ENCODE measurements at regions of chr12 and their contacts with region 1.

Region 1: GRCh38 chr12:2812290-2813213 is at the start of gene ITFG2:
- DNase-seq: peak; percentile 88
- ATAC-seq: peak; percentile 95
- H3K4me3 Mint-ChIP-seq: peak within 1 kb of the TSS; percentile 100
- H3K27ac Mint-ChIP-seq: peak within 1 kb of the TSS; percentile 99
- H3K4me1 Mint-ChIP-seq: peaks cover 33% of the 10 kb centered on the region
- H3K27me3 Mint-ChIP-seq: no peaks in the 10 kb centered on the region
- CTCF ChIP-seq: no peak
- total RNA-seq, gene ITFG2: 90.1 and 90.6 TPM in 2 replicates

Region 2: DNA sequence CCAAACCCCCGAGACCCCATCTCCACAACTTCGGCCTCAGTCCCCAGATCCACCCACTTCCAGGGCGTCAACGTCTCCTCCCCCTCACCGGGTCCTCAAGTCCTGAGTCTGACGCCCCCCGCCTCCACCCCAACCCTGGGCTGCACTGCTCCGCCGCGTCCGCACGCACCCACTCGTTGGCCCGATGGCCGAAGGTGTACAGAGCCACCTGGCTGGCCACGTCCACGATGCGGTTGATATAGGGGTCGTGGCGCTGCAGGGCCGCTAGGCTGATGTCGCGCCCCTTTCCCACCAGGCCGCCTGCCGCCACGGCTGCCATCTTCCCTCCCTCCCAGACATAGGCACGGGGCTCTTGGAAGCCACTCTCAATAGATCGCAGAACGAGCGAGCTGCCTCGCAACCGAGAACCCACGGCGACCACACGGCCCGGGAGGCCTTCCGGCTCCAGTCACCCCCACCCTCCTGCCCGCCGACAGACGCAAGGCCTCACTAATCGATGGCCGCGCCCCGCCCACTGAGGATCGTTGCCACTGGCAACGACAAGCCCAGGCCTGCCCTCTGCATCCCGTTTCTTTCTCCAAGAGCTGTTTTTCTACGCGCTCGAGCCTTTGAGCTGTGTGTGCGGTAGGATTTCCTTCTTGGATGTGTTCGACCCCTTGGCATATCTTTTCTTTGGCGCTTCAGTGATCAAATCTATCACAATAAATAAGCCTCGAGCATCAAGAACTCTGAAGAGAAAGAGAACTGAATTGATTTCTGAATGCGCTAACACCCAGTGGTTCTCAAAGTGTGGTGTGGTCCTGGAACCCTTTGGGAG is 808.2 kb before region 1 on chr12 and contains the start of gene DCP1B:
- CTCF ChIA-PET with region 1: no interaction called
- POLR2A ChIA-PET with region 1: no interaction called
- intact Hi-C with region 1: loop called (anchors 1 kb)
- DNase-seq: peak; percentile 83
- ATAC-seq: peak; percentile 99
- H3K4me3 Mint-ChIP-seq: peak within 1 kb of the TSS; percentile 99
- H3K27ac Mint-ChIP-seq: peak within 1 kb of the TSS; percentile 98
- H3K4me1 Mint-ChIP-seq: peaks cover 26% of the 10 kb centered on the region
- H3K27me3 Mint-ChIP-seq: no peaks in the 10 kb centered on the region
- CTCF ChIP-seq: no peak
- total RNA-seq, gene DCP1B: 12.4 and 14.7 TPM in 2 replicates

Region 3: DNA sequence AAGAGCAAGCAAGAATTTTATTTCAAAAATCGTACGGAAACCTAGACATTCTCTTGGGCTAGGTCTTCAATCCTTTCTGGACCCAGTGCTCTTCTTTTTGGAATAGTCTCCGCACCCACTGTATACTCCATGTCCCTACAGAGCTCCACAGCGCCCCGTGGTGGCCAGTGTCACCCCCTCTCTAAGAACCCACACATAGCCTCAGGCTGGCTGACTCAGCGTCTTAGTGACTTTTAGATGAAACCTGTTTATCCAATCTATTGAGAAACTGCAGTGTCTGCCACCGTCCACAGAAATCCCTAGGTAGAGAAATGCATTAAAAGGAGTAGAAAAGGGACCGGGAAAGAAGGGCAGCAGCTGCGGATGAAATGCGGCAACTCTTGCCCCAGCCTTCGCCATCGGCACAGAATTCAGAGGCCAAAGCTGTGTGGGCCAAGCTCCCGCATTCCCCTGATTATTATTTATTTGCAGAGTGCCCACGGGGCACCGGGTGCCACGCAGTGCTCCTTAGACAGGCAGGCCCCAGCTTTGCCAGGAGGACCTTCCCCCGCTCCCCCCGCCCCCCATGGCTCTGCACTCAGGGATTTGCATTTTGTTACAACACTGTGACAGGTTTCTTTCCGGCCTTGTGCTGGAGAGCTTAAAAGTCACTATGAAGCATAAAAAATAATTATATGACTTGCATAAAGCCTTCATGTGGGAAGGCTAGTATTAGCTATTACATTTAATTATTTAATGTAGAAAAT is 187.8 kb before region 1 on chr12:
- CTCF ChIA-PET with region 1: no interaction called
- POLR2A ChIA-PET with region 1: no interaction called
- intact Hi-C with region 1: no loop called
- DNase-seq: no peak
- ATAC-seq: no peak
- H3K4me3 Mint-ChIP-seq: no peak overlapping the region
- H3K27ac Mint-ChIP-seq: no peak overlapping the region
- H3K4me1 Mint-ChIP-seq: peaks cover 3% of the 10 kb centered on the region
- H3K27me3 Mint-ChIP-seq: peaks cover 43% of the 10 kb centered on the region
- CTCF ChIP-seq: no peak

Region 4: GRCh38 chr12:2682296-2683251 is 130.0 kb before region 1 on chr12:
- CTCF ChIA-PET with region 1: interaction called, 3 read pairs
- POLR2A ChIA-PET with region 1: no interaction called
- intact Hi-C with region 1: loop called (anchors 1 kb)
- DNase-seq: no peak
- ATAC-seq: peak; percentile 52
- H3K4me3 Mint-ChIP-seq: no peak overlapping the region
- H3K27ac Mint-ChIP-seq: no peak overlapping the region
- H3K4me1 Mint-ChIP-seq: peaks cover 4% of the 10 kb centered on the region
- H3K27me3 Mint-ChIP-seq: no peaks in the 10 kb centered on the region
- CTCF ChIP-seq: no peak

Region 5: DNA sequence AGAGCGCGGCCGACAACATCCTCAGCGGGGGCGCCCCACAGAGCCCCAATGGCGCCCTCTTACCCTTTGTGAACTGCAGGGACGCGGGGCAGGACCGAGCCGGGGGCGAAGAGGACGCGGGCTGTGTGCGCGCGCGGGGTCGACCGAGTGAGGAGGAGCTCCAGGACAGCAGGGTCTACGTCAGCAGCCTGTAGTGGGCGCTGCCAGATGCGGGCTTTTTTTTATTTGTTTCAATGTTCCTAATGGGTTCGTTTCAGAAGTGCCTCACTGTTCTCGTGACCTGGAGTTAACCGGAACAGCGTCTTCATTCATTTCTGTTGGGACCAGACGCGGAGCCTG is 121.6 kb before region 1 on chr12:
- CTCF ChIA-PET with region 1: no interaction called
- POLR2A ChIA-PET with region 1: interaction called, 3 read pairs
- intact Hi-C with region 1: loop called (anchors 1 kb)
- DNase-seq: no peak
- ATAC-seq: peak; percentile 78
- H3K4me3 Mint-ChIP-seq: peak overlapping the region; percentile 84
- H3K27ac Mint-ChIP-seq: peak overlapping the region; percentile 59
- H3K4me1 Mint-ChIP-seq: peaks cover 23% of the 10 kb centered on the region
- H3K27me3 Mint-ChIP-seq: peaks cover 19% of the 10 kb centered on the region
- CTCF ChIP-seq: no peak

Region 6: DNA sequence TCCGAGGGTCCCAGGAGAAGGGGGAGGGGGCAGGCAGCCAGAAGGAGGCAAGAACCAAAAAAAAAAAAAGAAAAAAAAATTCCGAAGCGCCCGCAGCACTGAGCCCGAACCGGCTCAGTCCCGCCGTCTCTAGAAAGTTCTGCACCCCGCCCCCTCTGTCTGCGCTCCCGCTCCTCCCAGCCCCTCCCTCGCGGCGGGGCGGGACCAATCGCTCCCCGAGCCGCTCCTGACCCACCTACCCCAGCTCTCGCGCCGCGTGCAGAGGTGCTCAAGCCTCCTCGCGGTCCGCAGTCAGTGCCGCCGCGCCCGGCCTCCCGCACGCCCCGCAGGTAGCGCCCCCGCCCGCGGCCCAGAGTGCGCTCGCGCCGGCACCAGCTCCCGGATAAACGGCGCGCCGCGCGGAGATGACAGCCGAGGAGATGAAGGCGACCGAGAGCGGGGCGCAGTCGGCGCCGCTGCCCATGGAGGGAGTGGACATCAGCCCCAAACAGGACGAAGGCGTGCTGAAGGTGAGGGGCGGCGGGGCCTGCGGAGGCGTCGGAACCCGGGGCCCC is 17.7 kb before region 1 on chr12 and contains the start of gene FKBP4:
- CTCF ChIA-PET with region 1: interaction called, 3 read pairs
- POLR2A ChIA-PET with region 1: interaction called, 36 read pairs
- intact Hi-C with region 1: loop called (anchors 1 kb)
- DNase-seq: peak; percentile 85
- ATAC-seq: peak; percentile 89
- H3K4me3 Mint-ChIP-seq: peak within 1 kb of the TSS; percentile 89
- H3K27ac Mint-ChIP-seq: peak within 1 kb of the TSS; percentile 81
- H3K4me1 Mint-ChIP-seq: peaks cover 20% of the 10 kb centered on the region
- H3K27me3 Mint-ChIP-seq: no peaks in the 10 kb centered on the region
- CTCF ChIP-seq: no peak
- total RNA-seq, gene FKBP4: 90.5 and 94.7 TPM in 2 replicates

Region 7: DNA sequence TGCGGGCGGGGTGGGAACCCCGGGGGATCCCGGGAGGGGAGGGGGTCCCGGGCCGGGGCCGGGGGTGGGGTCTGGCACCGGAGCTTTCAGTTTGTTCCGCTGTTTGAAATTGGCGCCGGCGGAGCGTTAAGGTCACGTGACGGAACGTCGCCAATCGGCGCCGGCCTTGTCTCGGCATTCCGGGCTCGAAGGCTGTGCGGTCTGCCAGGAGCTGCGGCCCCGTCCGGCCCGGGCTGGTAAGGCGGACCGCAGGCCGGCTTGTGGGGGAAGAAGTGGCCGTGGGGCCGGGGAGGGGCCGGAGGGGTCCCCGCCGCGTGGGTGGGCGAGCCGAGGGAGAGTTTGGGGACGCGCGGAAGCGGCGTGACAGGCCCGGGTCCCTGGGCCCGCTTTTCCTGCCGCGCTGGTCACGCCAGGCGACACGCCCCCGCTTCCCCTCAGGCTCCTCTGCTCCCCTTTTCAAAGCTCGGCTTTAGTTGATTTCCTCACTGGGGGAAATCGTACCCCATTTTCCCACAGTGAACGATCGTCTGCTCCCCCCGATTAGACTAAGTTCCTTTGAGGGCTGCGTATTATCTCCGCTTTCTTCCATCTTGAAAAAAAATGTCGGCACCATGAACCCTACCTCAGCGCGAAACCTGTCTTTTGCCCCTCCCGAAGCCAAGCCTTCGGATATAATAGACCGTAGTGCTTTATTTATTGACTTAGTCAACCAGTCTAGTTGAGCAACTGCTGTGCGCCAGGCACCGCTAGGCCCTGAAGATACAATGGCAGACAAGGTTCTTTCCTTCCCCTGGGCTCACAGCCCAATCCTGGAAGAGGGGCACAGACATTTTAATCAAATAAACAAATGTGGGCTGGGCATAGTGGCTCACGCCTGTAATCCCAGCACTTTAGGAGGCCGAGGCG is 64.7 kb after region 1 on chr12 and contains the starts of genes FOXM1 and RHNO1:
- CTCF ChIA-PET with region 1: no interaction called
- POLR2A ChIA-PET with region 1: interaction called, 8 read pairs
- intact Hi-C with region 1: loop called (anchors 1 kb)
- DNase-seq: peak; percentile 89
- ATAC-seq: peak; percentile 83
- H3K4me3 Mint-ChIP-seq: peak within 1 kb of the TSS; percentile 94
- H3K27ac Mint-ChIP-seq: peak within 1 kb of the TSS; percentile 94
- H3K4me1 Mint-ChIP-seq: peaks cover 28% of the 10 kb centered on the region
- H3K27me3 Mint-ChIP-seq: no peaks in the 10 kb centered on the region
- CTCF ChIP-seq: no peak
- total RNA-seq, gene FOXM1: 1.8 and 2.8 TPM in 2 replicates
- total RNA-seq, gene RHNO1: 12.4 and 14.4 TPM in 2 replicates

Region 8: DNA sequence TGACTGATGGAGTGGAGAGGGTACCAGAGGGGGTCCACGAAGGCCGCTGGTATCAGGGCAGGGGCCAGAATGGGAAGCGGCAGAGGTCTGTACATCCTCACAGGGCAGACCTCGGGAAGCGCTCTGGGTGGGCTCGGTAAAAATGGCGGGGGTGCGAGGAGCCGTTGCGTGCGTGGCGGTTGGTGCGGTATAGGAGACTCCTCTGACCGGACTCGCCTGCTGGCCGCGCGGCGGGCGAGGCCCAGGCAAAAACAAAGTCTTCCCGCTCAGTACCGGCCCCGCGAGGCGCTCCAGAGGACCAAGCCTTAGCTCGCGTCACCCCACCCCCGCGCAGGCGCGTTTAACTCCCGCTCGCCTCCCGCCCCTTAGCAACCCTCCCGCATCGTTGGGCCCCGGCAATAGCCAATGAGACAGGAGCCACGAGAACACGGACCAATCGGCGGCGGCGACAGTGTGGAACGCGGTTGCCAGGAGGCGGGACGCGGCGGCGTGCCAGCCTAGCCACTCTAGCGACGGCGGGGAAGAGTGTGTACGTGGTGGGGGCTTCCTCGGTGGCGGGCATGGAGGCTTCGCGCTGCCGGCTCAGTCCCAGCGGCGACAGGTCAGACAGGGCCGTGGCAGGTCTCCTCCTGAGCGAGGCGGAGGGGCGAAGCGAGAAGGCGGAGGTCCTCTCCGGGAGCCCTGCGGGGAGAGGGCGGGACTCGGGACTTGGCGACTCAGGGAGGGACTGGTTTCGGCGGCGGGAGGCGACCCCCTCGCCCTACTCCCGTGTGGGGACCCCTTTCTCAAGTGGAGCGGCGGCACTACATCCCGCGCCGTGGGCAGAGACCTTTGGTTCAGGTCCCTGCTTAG is 78.1 kb after region 1 on chr12 and contains the start of gene TULP3:
- CTCF ChIA-PET with region 1: no interaction called
- POLR2A ChIA-PET with region 1: interaction called, 8 read pairs
- intact Hi-C with region 1: loop called (anchors 1 kb)
- DNase-seq: peak; percentile 95
- ATAC-seq: peak; percentile 98
- H3K4me3 Mint-ChIP-seq: peak within 1 kb of the TSS; percentile 95
- H3K27ac Mint-ChIP-seq: peak within 1 kb of the TSS; percentile 91
- H3K4me1 Mint-ChIP-seq: peaks cover 25% of the 10 kb centered on the region
- H3K27me3 Mint-ChIP-seq: no peaks in the 10 kb centered on the region
- CTCF ChIP-seq: no peak
- total RNA-seq, gene TULP3: 7.0 and 7.3 TPM in 2 replicates

Region 9: DNA sequence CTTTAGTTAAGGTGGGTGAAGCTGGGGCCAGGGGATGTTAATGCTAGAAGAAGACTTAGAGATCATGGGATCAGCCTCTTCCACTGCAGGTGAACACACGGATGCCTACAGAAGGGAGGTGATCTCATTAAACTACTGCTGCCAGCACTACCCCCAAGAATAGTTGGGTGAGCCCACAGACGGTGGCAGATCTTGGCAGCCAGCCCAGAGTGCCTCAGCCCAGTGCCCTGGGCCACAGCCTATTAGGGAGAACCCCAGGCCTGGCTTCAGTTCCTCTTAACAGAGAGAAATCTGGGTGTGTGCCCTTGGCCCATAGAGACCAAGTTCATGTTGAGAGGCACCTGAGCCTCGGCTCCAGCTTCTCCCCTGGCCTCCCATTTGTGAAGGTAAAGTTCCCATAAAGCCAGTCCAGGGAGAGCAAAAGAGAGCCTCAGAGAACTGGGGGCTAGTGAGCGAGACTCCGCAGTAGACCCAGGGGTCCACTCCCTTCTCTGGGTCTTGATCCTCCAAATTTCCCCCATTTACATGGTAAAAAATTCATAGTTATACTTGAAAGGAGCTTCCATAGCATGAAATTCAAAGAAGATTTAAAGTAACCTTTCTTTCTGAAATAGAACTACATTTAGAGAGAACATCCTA is 1336.0 kb after region 1 on chr12:
- CTCF ChIA-PET with region 1: no interaction called
- POLR2A ChIA-PET with region 1: no interaction called
- intact Hi-C with region 1: no loop called
- DNase-seq: peak; percentile 80
- ATAC-seq: peak; percentile 83
- H3K4me3 Mint-ChIP-seq: peak overlapping the region; percentile 75
- H3K27ac Mint-ChIP-seq: peak overlapping the region; percentile 92
- H3K4me1 Mint-ChIP-seq: peaks cover 95% of the 10 kb centered on the region
- H3K27me3 Mint-ChIP-seq: no peaks in the 10 kb centered on the region
- CTCF ChIP-seq: no peak